ENCODE measurements at regions of chr16 and their contacts with region 1.

Region 1: DNA sequence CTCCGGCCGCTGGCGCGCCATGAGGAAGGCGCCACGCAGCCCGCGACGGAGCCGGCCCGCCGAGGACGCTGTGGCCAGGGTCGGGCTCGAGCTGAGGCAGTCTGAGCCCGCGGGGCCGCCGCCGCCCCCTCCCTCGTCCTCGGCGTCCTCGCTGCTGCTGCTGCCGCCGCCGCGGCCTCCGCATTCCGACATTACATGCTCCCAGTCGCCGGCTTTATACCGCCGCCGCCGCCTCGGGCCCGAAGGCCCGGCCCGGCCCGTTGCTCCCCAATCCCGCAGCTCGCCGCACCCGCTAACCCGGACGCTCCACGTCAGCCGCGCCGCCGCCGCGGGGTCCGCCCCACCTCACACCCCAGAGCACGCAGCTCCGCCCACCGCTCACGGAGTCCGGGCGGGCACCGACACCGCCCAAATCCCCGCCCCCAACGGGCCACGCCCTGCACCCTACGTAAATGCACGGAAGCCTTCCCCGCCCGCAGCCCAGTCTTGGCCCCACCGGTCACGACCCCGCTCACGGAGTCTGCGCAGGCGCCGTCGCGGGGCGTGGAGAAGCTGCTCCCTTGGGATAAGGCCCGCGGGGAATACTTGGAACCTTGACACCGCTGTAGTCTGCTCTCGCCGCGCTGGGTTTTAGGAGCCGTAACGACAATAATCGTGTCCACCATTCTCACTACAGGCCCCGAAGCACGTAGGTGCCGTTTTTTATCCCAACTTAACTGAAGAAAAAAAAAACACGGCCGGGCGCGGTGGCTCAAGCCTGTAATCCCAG is at the start of gene TXNDC11:
- DNase-seq: peak; percentile 98 to 99
- H3K4me3 ChIP-seq: peak within 1 kb of the TSS; percentile 84
- H3K4me3 Mint-ChIP-seq: peak within 1 kb of the TSS; percentile 92
- H3K27ac Mint-ChIP-seq: peak within 1 kb of the TSS; percentile 95
- H3K4me1 ChIP-seq: peaks cover 48% of the 10 kb centered on the region
- H3K4me1 Mint-ChIP-seq: peaks cover 16% of the 10 kb centered on the region
- H3K27me3 ChIP-seq: no peaks in the 10 kb centered on the region
- H3K27me3 Mint-ChIP-seq: no peaks in the 10 kb centered on the region
- CTCF ChIP-seq: no peak
- total RNA-seq, gene TXNDC11: 23.5 and 24.3 TPM in 2 replicates

Region 2: DNA sequence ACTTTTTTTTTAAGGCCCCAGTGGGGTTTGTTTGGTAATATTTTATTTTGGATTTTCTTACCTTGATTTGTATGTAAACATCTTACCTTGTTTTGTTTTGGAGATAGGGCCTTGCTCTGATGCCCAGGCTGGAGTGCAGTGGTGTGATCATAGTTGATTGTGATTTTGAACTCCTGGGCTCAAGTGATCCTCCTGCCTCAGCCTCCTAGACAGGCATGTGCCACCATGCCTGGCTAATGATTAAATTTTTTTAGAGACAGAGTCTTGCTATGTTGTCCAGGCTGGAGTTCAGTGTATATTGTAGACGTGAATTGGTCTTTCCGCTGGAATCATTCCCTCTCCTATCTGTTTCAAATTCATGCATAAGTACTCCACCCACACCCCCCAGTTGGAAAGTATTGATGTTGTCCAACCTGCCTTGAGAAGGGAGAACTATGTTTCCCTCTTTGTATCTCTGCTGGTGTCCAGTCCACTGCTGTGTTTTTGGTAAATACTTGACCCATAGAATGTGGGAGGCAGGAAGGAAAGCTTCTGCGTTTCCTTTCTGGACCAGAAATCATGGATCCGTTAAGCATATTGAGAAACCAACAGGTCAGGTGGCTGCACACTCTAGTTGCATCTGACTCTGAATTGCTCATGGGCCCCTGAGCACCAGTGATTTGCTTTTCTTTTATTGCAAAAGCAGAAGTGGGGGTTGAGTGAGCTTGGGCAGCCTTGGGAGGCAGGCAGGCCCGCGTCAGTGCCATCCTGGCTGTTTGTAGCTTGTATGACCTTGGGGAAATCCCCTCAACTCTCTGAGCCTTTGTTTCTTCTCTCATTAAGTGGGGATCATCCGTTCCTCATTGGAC is 372.4 kb before region 1 on chr16:
- CTCF ChIA-PET with region 1: no interaction called
- POLR2A ChIA-PET with region 1: no interaction called
- intact Hi-C with region 1: no loop called
- DNase-seq: no peak
- H3K4me3 ChIP-seq: no peak overlapping the region
- H3K4me3 Mint-ChIP-seq: no peak overlapping the region
- H3K27ac Mint-ChIP-seq: no peak overlapping the region
- H3K4me1 ChIP-seq: peaks cover 9% of the 10 kb centered on the region
- H3K4me1 Mint-ChIP-seq: no peaks in the 10 kb centered on the region
- H3K27me3 ChIP-seq: no peaks in the 10 kb centered on the region
- H3K27me3 Mint-ChIP-seq: no peaks in the 10 kb centered on the region
- CTCF ChIP-seq: no peak

Region 3: DNA sequence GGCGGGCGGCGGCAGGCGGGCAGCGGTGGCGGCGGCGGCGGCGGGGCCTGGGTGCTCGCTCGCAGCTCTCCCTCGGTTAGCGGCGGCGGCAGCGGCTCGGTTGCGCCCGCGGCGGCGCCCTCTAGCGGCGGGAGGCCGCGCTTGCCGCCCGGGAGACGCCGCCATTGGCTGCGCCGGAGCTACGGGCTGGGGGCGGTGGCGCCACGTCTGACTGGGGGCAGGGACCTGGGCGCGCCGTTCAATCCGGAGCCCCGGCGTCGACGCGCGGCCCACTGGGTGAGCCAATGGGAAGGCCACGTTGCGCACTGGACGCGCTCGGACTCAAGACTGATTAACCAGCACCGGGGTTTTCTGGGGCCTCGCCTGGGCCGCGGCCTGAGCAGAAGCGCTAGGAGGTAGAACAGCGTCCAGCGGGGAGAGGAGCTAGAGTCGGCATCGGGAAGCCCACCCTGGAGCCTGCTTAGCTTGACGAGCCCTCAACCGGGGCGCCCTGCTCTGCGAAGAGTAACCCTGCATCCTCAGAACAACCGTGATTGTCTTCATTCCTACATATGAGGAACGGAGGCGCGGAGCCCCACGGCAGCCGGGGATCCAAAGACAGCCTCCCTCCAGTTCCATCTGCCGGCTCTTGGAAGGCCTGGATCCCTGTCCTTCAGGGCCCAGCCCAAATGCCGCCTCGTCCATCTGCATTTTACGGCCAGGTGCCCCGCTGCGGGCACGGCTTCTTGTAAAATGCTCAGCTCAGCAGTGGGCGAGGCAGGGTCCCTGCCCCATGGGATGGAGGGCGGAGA is 54.6 kb after region 1 on chr16 and contains the start of gene ZC3H7A:
- CTCF ChIA-PET with region 1: interaction called, 10 read pairs
- POLR2A ChIA-PET with region 1: interaction called, 34 read pairs
- intact Hi-C with region 1: loop called (anchors 5 kb)
- DNase-seq: peak; percentile 95 to 96
- H3K4me3 ChIP-seq: peak within 1 kb of the TSS; percentile 93
- H3K4me3 Mint-ChIP-seq: peak within 1 kb of the TSS; percentile 96
- H3K27ac Mint-ChIP-seq: peak within 1 kb of the TSS; percentile 91
- H3K4me1 ChIP-seq: peaks cover 21% of the 10 kb centered on the region
- H3K4me1 Mint-ChIP-seq: peaks cover 17% of the 10 kb centered on the region
- H3K27me3 ChIP-seq: no peaks in the 10 kb centered on the region
- H3K27me3 Mint-ChIP-seq: no peaks in the 10 kb centered on the region
- CTCF ChIP-seq: peak; percentile 16 to 54
- total RNA-seq, gene ZC3H7A: 42.0 TPM in 2 replicates